Activated CD4-positive, alpha-beta memory T cell treated with anti-CD3 and anti-CD28 coated beads for 36 hours (primary cell): ENCODE measurements at regions of chr6 and their contacts with region 1.

Region 1: DNA sequence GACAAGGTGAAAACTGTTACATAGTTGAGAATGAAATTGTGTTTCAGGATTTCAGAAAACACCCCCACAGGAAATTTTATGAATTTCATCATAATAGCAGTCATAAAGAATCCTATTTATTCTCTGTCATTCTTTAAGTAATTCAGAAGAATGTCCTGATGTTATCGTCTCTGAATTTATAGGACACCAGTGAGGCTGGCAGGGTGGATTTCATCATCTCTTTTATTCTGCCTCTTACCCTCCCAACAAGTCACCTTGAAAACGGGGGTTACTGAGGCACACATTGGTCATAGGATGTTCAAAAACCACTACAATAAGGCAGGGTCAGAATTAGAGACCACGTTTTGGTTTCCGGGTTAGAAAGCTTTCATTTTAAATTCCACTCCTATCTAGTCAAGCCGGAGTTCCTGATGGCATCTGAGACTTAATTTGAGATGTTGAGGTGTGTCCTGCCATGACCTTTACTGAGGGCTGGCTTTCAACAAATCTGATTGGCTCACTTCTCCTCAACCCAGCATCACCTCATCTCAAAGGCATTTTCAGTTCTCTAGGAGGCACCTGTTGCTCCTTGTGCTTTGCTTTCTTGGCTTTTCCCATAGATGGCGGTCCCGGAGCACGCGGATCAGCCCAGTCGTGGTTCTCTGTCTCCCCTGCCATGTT is 230.6 kb upstream of the SUPT3H start:
- DNase-seq: peak; percentile 34
- H3K4me3 Mint-ChIP-seq: no peak overlapping the region
- H3K27ac Mint-ChIP-seq: peak overlapping the region; percentile 86
- H3K4me1 Mint-ChIP-seq: peaks cover 39% of the 10 kb centered on the region
- H3K27me3 Mint-ChIP-seq: peaks cover 1% of the 10 kb centered on the region

Region 2: GRCh38 chr6:45577836-45578504 is 30.4 kb before region 1 on chr6:
- CTCF ChIA-PET with region 1: no interaction called
- POLR2A ChIA-PET with region 1: no interaction called
- intact Hi-C with region 1: no loop called
- DNase-seq: no peak
- H3K4me3 Mint-ChIP-seq: no peak overlapping the region
- H3K27ac Mint-ChIP-seq: no peak overlapping the region
- H3K4me1 Mint-ChIP-seq: peaks cover 4% of the 10 kb centered on the region
- H3K27me3 Mint-ChIP-seq: no peaks in the 10 kb centered on the region

Region 3: GRCh38 chr6:45595010-45595851 is 13.2 kb before region 1 on chr6:
- CTCF ChIA-PET with region 1: interaction called, 3 read pairs
- POLR2A ChIA-PET with region 1: interaction called, 8 read pairs
- intact Hi-C with region 1: loop called (anchors 1 kb)
- DNase-seq: no peak
- H3K4me3 Mint-ChIP-seq: no peak overlapping the region
- H3K27ac Mint-ChIP-seq: peak overlapping the region; percentile 78
- H3K4me1 Mint-ChIP-seq: peaks cover 67% of the 10 kb centered on the region
- H3K27me3 Mint-ChIP-seq: no peaks in the 10 kb centered on the region

Region 4: GRCh38 chr6:45677381-45678284 is 69.3 kb after region 1 on chr6:
- CTCF ChIA-PET with region 1: no interaction called
- POLR2A ChIA-PET with region 1: no interaction called
- intact Hi-C with region 1: loop called (anchors 2 kb)
- DNase-seq: peak; percentile 77
- H3K4me3 Mint-ChIP-seq: peak overlapping the region; percentile 60
- H3K27ac Mint-ChIP-seq: peak overlapping the region; percentile 85
- H3K4me1 Mint-ChIP-seq: peaks cover 41% of the 10 kb centered on the region
- H3K27me3 Mint-ChIP-seq: no peaks in the 10 kb centered on the region

Region 5: DNA sequence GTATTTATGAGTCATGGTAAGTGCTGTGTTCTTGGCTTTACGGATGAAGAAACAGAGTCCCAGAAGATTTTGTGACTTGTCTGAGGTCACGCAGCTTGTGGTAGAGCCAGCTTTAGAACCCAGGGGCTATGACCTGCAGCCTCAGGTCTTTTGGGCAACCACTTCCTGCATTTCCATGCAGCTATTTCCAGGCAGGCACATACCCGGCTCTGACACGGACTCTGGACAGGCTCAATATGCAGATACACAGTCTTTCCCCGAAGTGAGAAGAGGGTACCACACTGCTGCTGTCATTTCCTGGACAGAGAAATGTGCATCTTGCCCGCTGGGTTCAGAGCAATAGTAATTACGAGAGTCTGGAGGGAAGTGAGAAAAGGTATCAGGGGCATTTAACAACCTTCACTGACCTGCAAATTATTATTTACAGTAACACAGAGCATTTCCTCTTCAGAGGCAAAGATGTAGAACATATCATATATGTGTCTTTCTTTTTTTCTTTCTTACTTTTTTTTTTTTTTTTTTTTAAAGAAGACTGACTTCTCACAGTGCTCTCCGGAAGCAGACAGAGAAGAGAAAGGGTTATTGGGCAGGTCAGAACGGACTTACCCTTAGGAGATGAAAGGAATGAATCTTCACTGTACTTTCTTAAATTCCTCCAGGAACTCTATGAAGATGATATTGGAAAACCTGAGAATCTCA is 222.2 kb after region 1 on chr6:
- CTCF ChIA-PET with region 1: no interaction called
- POLR2A ChIA-PET with region 1: no interaction called
- intact Hi-C with region 1: loop called (anchors 5 kb)
- DNase-seq: peak; percentile 88
- H3K4me3 Mint-ChIP-seq: peak overlapping the region; percentile 75
- H3K27ac Mint-ChIP-seq: peak overlapping the region; percentile 95
- H3K4me1 Mint-ChIP-seq: peaks cover 59% of the 10 kb centered on the region
- H3K27me3 Mint-ChIP-seq: peaks cover 2% of the 10 kb centered on the region